ENCODE measurements at regions of chr1 and their contacts with region 1.

Region 1: GRCh38 chr1:78607334-78607927 is 12.8 kb upstream of the IFI44L start:
- DNase-seq: no peak
- H3K4me3 ChIP-seq: no peak overlapping the region
- H3K4me3 Mint-ChIP-seq: no peak overlapping the region
- H3K27ac ChIP-seq: no peak overlapping the region
- H3K27ac Mint-ChIP-seq: no peak overlapping the region
- H3K4me1 ChIP-seq: no peaks in the 10 kb centered on the region
- H3K4me1 Mint-ChIP-seq: no peaks in the 10 kb centered on the region
- H3K27me3 ChIP-seq: no peaks in the 10 kb centered on the region
- H3K27me3 Mint-ChIP-seq: peaks cover 0 to 4% (median 3%) of the 10 kb centered on the region in 3 donors
- CTCF ChIP-seq: peak; percentile 30

Region 2: GRCh38 chr1:78132174-78132947 is 475.1 kb before region 1 on chr1:
- intact Hi-C with region 1: loop called in 1 of 2 experiments (anchors 10 kb)
- DNase-seq: no peak
- H3K4me3 ChIP-seq: no peak overlapping the region
- H3K4me3 Mint-ChIP-seq: no peak overlapping the region
- H3K27ac ChIP-seq: no peak overlapping the region
- H3K27ac Mint-ChIP-seq: no peak overlapping the region
- H3K4me1 ChIP-seq: no peaks in the 10 kb centered on the region
- H3K4me1 Mint-ChIP-seq: no peaks in the 10 kb centered on the region
- H3K27me3 ChIP-seq: no peaks in the 10 kb centered on the region
- H3K27me3 Mint-ChIP-seq: peaks cover 0 to 1% (median 0%) of the 10 kb centered on the region in 3 donors
- CTCF ChIP-seq: no peak